B cell (primary cell): ENCODE measurements at regions of chr17 and their contacts with region 1.

Region 1: GRCh38 chr17:78341559-78342448 is 18.1 kb downstream of the SOCS3 start:
- DNase-seq: peak; percentile 57
- ATAC-seq: no peak
- H3K4me3 ChIP-seq: peak overlapping the region in 4 of 5 experiments; percentile 26 to 58 (median 53)
- H3K4me3 Mint-ChIP-seq: peak overlapping the region; percentile 85
- H3K27ac ChIP-seq: peak overlapping the region; percentile 95
- H3K27ac Mint-ChIP-seq: peak overlapping the region; percentile 41
- H3K4me1 ChIP-seq: peaks cover 71 to 80% of the 10 kb centered on the region in 2 donors
- H3K4me1 Mint-ChIP-seq: peaks cover 76% of the 10 kb centered on the region
- H3K27me3 ChIP-seq: no peaks in the 10 kb centered on the region
- H3K27me3 Mint-ChIP-seq: no peaks in the 10 kb centered on the region
- CTCF ChIP-seq: no peak

Region 2: GRCh38 chr17:78272181-78272913 is 69.5 kb before region 1 on chr17:
- CTCF ChIA-PET with region 1: no interaction called
- POLR2A ChIA-PET with region 1: no interaction called
- intact Hi-C with region 1: loop called (anchors 2 kb)
- DNase-seq: peak; percentile 80
- ATAC-seq: peak; percentile 70
- H3K4me3 ChIP-seq: no peak overlapping the region
- H3K4me3 Mint-ChIP-seq: peak overlapping the region; percentile 68
- H3K27ac ChIP-seq: no peak overlapping the region
- H3K27ac Mint-ChIP-seq: peak overlapping the region; percentile 83
- H3K4me1 ChIP-seq: peaks cover 4 to 33% of the 10 kb centered on the region in 2 donors
- H3K4me1 Mint-ChIP-seq: peaks cover 43% of the 10 kb centered on the region
- H3K27me3 ChIP-seq: peaks cover 0 to 23% (median 10%) of the 10 kb centered on the region in 4 experiments
- H3K27me3 Mint-ChIP-seq: peaks cover 25% of the 10 kb centered on the region
- CTCF ChIP-seq: no peak

Region 3: DNA sequence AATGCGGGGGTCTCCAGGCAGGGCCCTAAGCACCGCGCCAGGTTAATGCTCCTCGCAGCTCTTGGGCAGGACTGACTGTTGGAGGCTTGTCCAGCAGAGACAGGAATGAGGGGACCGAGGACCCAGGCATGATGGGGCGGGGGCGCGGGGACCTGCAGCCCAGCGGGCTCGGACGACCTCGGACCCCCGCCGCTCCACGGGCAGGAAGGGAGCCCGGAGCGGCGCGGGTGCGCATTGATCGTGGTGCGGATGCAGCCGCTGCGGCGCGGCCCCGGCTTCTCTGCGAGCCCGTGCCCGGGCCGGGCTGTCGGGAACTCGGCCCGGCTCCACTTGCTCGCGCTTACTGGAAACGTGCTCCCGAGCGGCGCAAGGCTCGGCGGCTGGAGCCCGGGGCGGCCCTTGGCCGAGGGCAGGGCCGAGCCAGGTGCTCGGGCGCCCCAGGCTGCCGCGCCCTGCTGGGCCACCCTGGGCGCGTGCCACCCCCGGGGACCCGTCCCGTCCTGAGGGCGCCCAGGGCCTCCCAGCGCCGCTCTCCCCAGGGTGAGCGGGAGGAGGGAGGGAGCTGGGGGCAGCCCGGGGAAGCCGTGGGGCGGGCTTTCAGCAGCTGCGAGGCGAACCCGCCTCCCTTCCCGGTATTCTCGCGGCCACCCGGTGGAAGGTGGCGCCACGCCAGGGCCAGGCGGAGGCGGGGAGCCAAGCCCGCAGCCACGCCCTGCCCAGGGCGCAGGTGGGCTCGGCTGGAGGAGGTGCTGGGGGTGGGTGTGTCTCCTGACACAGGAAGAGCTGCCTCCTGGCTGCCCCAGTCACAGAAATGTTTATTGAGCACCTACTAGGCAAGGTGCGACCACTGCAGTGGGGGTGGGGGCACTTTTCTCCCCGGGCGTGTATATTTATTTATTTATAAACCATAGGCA is 27.8 kb before region 1 on chr17:
- CTCF ChIA-PET with region 1: interaction called, 3 read pairs
- POLR2A ChIA-PET with region 1: interaction called, 10 read pairs
- intact Hi-C with region 1: loop called (anchors 2 kb)
- DNase-seq: peak; percentile 72
- ATAC-seq: peak; percentile 73
- H3K4me3 ChIP-seq: peak overlapping the region in 4 of 5 experiments; percentile 11 to 56 (median 50)
- H3K4me3 Mint-ChIP-seq: peak overlapping the region; percentile 68
- H3K27ac ChIP-seq: no peak overlapping the region
- H3K27ac Mint-ChIP-seq: no peak overlapping the region
- H3K4me1 ChIP-seq: peaks cover 35 to 41% of the 10 kb centered on the region in 2 donors
- H3K4me1 Mint-ChIP-seq: peaks cover 31% of the 10 kb centered on the region
- H3K27me3 ChIP-seq: peaks cover 0 to 33% (median 5%) of the 10 kb centered on the region in 4 experiments
- H3K27me3 Mint-ChIP-seq: peaks cover 11% of the 10 kb centered on the region
- CTCF ChIP-seq: no peak

Region 4: GRCh38 chr17:78378225-78379130 is 36.7 kb after region 1 on chr17 and contains the start of gene PGS1:
- CTCF ChIA-PET with region 1: no interaction called
- POLR2A ChIA-PET with region 1: interaction called, 4 read pairs
- intact Hi-C with region 1: loop called (anchors 1 kb)
- DNase-seq: peak; percentile 88
- ATAC-seq: peak; percentile 78
- H3K4me3 ChIP-seq: peak within 1 kb of the TSS; percentile 75 to 93 (median 87)
- H3K4me3 Mint-ChIP-seq: peak within 1 kb of the TSS; percentile 93
- H3K27ac ChIP-seq: peak within 1 kb of the TSS; percentile 46 to 87
- H3K27ac Mint-ChIP-seq: peak within 1 kb of the TSS; percentile 81
- H3K4me1 ChIP-seq: peaks cover 25 to 35% of the 10 kb centered on the region in 2 donors
- H3K4me1 Mint-ChIP-seq: peaks cover 36% of the 10 kb centered on the region
- H3K27me3 ChIP-seq: no peaks in the 10 kb centered on the region
- H3K27me3 Mint-ChIP-seq: no peaks in the 10 kb centered on the region
- CTCF ChIP-seq: no peak
- total RNA-seq, gene PGS1: 88.3 and 91.1 TPM in 2 replicates